Endothelial cell of umbilical vein (primary cell): ENCODE measurements at regions of chr11 and their contacts with region 1.

Region 1: GRCh38 chr11:120172054-120172911 is 34.4 kb upstream of the TRIM29 start:
- DNase-seq: peak; percentile 39
- H3K4me3 ChIP-seq: no peak overlapping the region
- H3K27ac ChIP-seq: no peak overlapping the region
- H3K4me1 ChIP-seq: peaks cover 7% of the 10 kb centered on the region
- H3K27me3 ChIP-seq: peaks cover 31 to 48% of the 10 kb centered on the region in 2 experiments
- CTCF ChIP-seq: peak; percentile 63 to 87
- POLR2A ChIP-seq: no peak

Region 2: GRCh38 chr11:119666463-119667131 is 505.7 kb before region 1 on chr11:
- CTCF ChIA-PET with region 1: interaction called, 3 read pairs
- POLR2A ChIA-PET with region 1: no interaction called
- dilution Hi-C with region 1: no loop called
- intact Hi-C with region 1: loop called (anchors 1 kb)
- DNase-seq: peak; percentile 65
- H3K4me3 ChIP-seq: no peak overlapping the region
- H3K27ac ChIP-seq: no peak overlapping the region
- H3K4me1 ChIP-seq: peaks cover 8% of the 10 kb centered on the region
- H3K27me3 ChIP-seq: no peaks in the 10 kb centered on the region
- CTCF ChIP-seq: peak; percentile 87 to 95
- POLR2A ChIP-seq: no peak

Region 3: DNA sequence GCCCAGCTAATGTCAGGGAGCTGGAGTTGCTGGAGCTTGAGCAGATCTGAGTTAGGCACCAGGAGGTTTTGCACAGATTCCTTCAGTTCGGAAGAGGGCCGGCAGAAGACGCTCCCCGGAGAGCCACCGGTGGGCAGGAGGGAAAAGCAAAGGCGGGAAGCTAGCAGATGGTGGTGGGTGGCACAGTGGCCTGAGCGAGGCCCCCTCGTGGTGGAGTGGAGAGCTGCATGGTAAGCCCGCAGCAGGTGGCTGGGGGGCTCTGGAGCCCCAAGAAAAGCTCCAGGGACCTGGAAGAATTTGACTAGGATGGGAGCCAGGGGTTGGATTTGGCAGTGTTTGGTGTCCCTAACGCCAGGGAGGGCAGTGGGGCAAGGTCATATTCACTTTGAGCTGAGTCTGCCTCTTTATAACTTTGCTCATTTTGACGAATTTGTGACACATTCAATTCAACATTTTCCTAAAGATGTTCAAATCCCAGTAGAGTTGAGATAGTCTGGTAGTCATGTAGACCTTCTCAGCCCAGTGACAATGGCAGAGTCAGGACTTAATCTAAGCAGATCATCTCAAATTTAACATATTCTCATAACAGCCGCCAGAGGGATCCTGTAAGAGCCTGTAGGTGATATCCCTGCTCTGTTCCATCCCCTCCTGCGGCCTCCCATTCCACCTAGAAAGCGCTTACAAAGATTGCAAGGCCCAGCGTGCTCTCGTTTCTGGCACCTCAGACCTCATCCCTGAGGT is 92.4 kb before region 1 on chr11:
- CTCF ChIA-PET with region 1: no interaction called
- POLR2A ChIA-PET with region 1: no interaction called
- dilution Hi-C with region 1: no loop called
- intact Hi-C with region 1: no loop called
- DNase-seq: no peak
- H3K4me3 ChIP-seq: no peak overlapping the region
- H3K27ac ChIP-seq: no peak overlapping the region
- H3K4me1 ChIP-seq: no peaks in the 10 kb centered on the region
- H3K27me3 ChIP-seq: no peaks in the 10 kb centered on the region
- CTCF ChIP-seq: no peak
- POLR2A ChIP-seq: no peak

Region 4: GRCh38 chr11:120182790-120183491 is 10.7 kb after region 1 on chr11:
- CTCF ChIA-PET with region 1: interaction called, 36 read pairs
- POLR2A ChIA-PET with region 1: no interaction called
- dilution Hi-C with region 1: no loop called
- intact Hi-C with region 1: no loop called
- DNase-seq: no peak
- H3K4me3 ChIP-seq: no peak overlapping the region
- H3K27ac ChIP-seq: no peak overlapping the region
- H3K4me1 ChIP-seq: no peaks in the 10 kb centered on the region
- H3K27me3 ChIP-seq: no peaks in the 10 kb centered on the region
- CTCF ChIP-seq: peak; percentile 22 to 34
- POLR2A ChIP-seq: no peak

Region 5: GRCh38 chr11:120210626-120211521 is 38.6 kb after region 1 on chr11 and contains the start of gene OAF:
- CTCF ChIA-PET with region 1: interaction called, 16 read pairs
- POLR2A ChIA-PET with region 1: no interaction called
- dilution Hi-C with region 1: no loop called
- intact Hi-C with region 1: loop called (anchors 1 kb)
- DNase-seq: peak; percentile 84
- H3K4me3 ChIP-seq: peak within 1 kb of the TSS; percentile 37 to 67 (median 60)
- H3K27ac ChIP-seq: peak within 1 kb of the TSS; percentile 47
- H3K4me1 ChIP-seq: peaks cover 40% of the 10 kb centered on the region
- H3K27me3 ChIP-seq: no peaks in the 10 kb centered on the region
- CTCF ChIP-seq: peak in 1 of 2 donors; percentile 13
- POLR2A ChIP-seq: peak; percentile 86
- total RNA-seq, gene OAF: 26.7 and 32.1 TPM in 2 replicates

Region 6: GRCh38 chr11:120229451-120230424 is 57.5 kb after region 1 on chr11:
- CTCF ChIA-PET with region 1: interaction called, 217 read pairs
- POLR2A ChIA-PET with region 1: interaction called, 3 read pairs
- dilution Hi-C with region 1: no loop called
- intact Hi-C with region 1: loop called (anchors 1 kb)
- DNase-seq: peak; percentile 48
- H3K4me3 ChIP-seq: no peak overlapping the region
- H3K27ac ChIP-seq: no peak overlapping the region
- H3K4me1 ChIP-seq: peaks cover 11% of the 10 kb centered on the region
- H3K27me3 ChIP-seq: peaks cover 1 to 7% of the 10 kb centered on the region in 2 experiments
- CTCF ChIP-seq: peak; percentile 49 to 63
- POLR2A ChIP-seq: no peak

Region 7: DNA sequence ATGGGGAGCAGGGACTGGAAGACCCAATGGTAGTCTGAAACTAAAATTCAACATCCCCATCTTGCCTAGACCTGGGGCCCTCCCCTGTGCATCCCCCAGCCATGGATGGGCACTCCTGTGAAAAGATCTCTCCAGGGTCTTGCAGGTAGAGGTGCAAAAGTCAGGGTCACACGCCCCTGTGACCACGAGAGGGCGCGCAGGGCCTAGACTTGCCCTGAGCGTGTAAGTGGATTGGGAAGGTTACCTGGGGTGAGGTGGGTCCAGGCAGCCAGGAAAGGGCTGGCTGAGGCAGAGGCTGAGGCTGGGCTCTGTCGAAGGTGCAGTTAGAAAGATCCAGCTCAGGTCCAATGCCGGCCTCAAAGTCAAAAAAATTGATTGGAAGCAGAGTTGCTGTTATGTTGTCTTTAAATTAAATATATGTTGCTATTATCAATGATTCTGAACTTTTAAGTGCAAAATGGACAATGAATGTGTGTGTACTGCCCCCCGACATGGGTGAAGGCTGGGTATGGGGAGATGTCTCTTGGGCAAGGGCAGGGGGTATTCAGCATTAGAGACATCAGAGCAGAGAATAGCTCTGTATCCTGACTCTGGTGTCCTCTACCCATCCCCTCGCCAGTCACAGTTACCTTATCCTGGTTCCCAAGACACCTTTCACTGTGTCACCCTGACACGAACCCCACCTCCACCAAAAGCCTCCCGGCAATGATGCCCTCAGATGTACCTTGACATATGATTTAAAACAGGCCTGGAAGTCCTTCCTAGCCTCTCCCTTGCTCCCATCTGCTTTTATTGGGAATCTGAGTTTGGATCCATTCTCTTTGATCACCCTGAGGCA is 63.0 kb after region 1 on chr11:
- CTCF ChIA-PET with region 1: interaction called, 217 read pairs
- POLR2A ChIA-PET with region 1: no interaction called
- dilution Hi-C with region 1: no loop called
- intact Hi-C with region 1: no loop called
- DNase-seq: peak; percentile 56
- H3K4me3 ChIP-seq: no peak overlapping the region
- H3K27ac ChIP-seq: no peak overlapping the region
- H3K4me1 ChIP-seq: no peaks in the 10 kb centered on the region
- H3K27me3 ChIP-seq: peaks cover 19% of the 10 kb centered on the region in 2 experiments
- CTCF ChIP-seq: peak; percentile 77 to 79
- POLR2A ChIP-seq: no peak

Region 8: GRCh38 chr11:120248551-120249278 is 76.4 kb after region 1 on chr11:
- CTCF ChIA-PET with region 1: interaction called, 10 read pairs
- POLR2A ChIA-PET with region 1: no interaction called
- dilution Hi-C with region 1: no loop called
- intact Hi-C with region 1: no loop called
- DNase-seq: no peak
- H3K4me3 ChIP-seq: no peak overlapping the region
- H3K27ac ChIP-seq: no peak overlapping the region
- H3K4me1 ChIP-seq: peaks cover 4% of the 10 kb centered on the region
- H3K27me3 ChIP-seq: peaks cover 26 to 37% of the 10 kb centered on the region in 2 experiments
- CTCF ChIP-seq: no peak
- POLR2A ChIP-seq: no peak